ENCODE measurements at regions of chr5 and their contacts with region 1.

Region 1: GRCh38 chr5:132456296-132457001 is 34.1 kb downstream of the IRF1 start:
- DNase-seq: peak; percentile 54
- H3K4me3 Mint-ChIP-seq: peak overlapping the region; percentile 45
- H3K27ac Mint-ChIP-seq: peak overlapping the region; percentile 97
- H3K4me1 Mint-ChIP-seq: peaks cover 82% of the 10 kb centered on the region
- H3K27me3 Mint-ChIP-seq: no peaks in the 10 kb centered on the region

Region 2: DNA sequence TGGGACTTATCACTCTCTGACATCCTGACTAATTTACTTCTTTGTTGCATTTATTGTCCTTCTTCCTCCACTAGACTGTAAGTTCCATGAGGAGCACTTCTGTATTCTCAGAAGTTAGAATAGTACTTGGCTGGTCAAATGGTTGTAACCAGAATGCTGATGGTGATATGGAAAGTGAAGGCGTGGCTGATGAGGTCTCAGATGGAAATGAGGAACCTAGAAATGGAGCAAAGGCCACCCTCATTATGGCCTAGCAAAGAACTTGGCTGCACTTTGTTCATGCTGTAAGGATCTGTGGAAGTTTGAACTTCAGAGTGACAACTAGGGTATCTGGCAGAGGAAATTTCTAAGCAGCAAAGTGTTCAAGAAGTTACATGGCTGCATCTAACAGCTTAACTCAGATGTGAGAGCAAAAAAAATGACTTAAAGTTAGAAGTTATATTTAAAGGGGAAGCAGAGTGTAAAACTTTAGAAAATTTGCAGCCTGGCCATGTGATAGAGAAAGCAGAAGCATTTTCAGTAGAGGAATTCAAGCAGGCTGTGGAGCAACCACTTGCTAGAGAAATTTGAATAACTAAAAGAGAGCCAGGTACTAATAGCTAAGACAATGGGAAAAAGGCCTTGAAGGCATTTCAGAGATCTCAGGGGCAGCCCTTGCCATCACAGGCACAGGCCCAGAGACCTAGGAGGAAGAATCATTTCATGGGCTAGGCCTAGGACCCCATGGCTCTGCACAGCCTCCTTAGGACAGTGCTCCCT is 101.9 kb before region 1 on chr5:
- intact Hi-C with region 1: no loop called
- DNase-seq: no peak
- H3K4me3 Mint-ChIP-seq: no peak overlapping the region
- H3K27ac Mint-ChIP-seq: no peak overlapping the region
- H3K4me1 Mint-ChIP-seq: no peaks in the 10 kb centered on the region
- H3K27me3 Mint-ChIP-seq: peaks cover 5% of the 10 kb centered on the region

Region 3: GRCh38 chr5:132394667-132395259 is 61.7 kb before region 1 on chr5:
- intact Hi-C with region 1: no loop called
- DNase-seq: no peak
- H3K4me3 Mint-ChIP-seq: no peak overlapping the region
- H3K27ac Mint-ChIP-seq: no peak overlapping the region
- H3K4me1 Mint-ChIP-seq: peaks cover 45% of the 10 kb centered on the region
- H3K27me3 Mint-ChIP-seq: peaks cover 3% of the 10 kb centered on the region

Region 4: DNA sequence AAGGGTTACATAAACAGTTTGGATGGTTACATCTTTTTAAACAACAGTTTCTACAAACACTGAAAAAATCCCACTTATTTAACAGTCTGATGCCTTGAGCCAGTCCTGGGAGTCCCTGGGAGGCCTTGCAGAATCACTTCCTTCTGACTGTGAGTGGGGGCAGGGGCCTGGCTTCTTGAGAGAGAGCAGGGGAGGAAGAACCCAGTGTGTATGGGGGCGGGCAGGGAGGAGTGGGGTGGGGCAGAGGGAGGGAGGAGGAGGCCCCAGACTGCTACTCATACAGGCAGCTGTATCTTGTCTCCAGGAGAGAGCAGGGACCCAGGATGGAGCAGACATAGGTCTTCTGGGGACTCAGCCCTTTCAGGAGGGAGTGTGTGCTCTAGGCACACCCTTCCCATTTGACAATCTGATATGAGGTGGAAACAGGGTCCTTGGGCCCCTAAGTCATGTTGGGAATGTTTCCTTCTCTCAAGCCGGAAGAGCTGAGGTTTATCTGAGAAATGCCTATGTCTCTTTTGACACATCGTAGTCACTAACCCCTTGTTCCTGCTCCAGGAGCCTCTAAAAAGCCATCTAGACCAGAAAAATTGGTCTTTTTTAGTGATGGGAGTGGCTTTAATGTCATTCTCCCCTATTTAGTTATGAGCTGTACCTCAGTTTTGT is 18.7 kb before region 1 on chr5:
- intact Hi-C with region 1: loop called (anchors 1 kb)
- DNase-seq: no peak
- H3K4me3 Mint-ChIP-seq: peak overlapping the region; percentile 17
- H3K27ac Mint-ChIP-seq: peak overlapping the region; percentile 78
- H3K4me1 Mint-ChIP-seq: peaks cover 74% of the 10 kb centered on the region
- H3K27me3 Mint-ChIP-seq: no peaks in the 10 kb centered on the region

Region 5: GRCh38 chr5:132466433-132467286 is 10.2 kb after region 1 on chr5:
- intact Hi-C with region 1: loop called (anchors 1 kb)
- DNase-seq: peak; percentile 77
- H3K4me3 Mint-ChIP-seq: peak overlapping the region; percentile 58
- H3K27ac Mint-ChIP-seq: peak overlapping the region; percentile 82
- H3K4me1 Mint-ChIP-seq: peaks cover 83% of the 10 kb centered on the region
- H3K27me3 Mint-ChIP-seq: no peaks in the 10 kb centered on the region

Region 6: GRCh38 chr5:132473019-132473531 is 16.6 kb after region 1 on chr5:
- intact Hi-C with region 1: loop called (anchors 2 kb)
- DNase-seq: peak; percentile 86
- H3K4me3 Mint-ChIP-seq: peak overlapping the region; percentile 51
- H3K27ac Mint-ChIP-seq: peak overlapping the region; percentile 94
- H3K4me1 Mint-ChIP-seq: peaks cover 58% of the 10 kb centered on the region
- H3K27me3 Mint-ChIP-seq: no peaks in the 10 kb centered on the region